Ovary (tissue), 10 donors: ENCODE measurements at regions of chr22 and their contacts with region 1.

Region 1: DNA sequence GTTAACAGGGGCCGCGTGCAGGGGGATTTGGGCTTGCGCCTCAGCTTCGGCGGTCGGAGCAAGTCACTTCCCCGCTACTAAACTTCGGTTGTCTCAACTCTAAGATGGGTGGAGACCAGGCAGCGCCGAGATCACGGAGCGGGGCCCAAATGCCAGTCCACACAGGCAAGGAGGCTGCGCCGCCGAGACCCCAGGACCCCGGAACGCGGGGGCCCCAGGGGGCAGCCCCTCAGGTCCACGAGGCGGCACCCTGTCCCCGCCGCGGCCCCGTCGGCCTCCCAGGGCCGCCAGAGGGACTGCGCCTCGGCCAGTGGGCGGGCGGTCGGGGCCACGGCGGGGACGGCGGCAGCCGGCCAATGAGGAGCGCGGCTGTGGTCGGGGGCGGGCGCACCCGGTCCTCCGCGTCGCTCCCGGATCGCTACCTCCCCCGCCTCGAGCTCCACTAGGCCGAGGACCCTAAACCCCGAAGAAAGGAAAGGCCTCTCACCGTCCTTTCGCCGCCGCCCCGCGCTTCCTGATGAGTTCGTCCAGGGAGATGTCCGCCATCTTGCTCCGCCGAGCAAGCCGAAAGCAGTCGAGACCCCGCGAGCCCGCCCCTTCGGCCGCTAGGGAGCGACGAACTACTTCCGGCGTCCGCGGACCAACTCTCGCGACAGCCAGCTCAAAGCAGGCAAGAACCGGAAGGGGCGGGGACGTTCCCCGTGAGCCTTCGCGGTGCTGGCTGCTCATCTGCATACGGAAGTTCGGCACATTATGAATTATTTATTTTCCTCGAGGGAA is at the start of gene POLDIP3:
- DNase-seq: peak; percentile 99 to 100 (median 99)
- H3K4me3 ChIP-seq: peak within 1 kb of the TSS; percentile 89
- H3K27ac ChIP-seq: peak within 1 kb of the TSS; percentile 91 to 92
- H3K4me1 ChIP-seq: peaks cover 16% of the 10 kb centered on the region
- H3K27me3 ChIP-seq: no peaks in the 10 kb centered on the region
- CTCF ChIP-seq: no peak
- EP300 ChIP-seq: no peak
- POLR2A ChIP-seq: peak; percentile 60
- total RNA-seq, gene POLDIP3: 44.0 to 133 (median 103) TPM

Region 2: DNA sequence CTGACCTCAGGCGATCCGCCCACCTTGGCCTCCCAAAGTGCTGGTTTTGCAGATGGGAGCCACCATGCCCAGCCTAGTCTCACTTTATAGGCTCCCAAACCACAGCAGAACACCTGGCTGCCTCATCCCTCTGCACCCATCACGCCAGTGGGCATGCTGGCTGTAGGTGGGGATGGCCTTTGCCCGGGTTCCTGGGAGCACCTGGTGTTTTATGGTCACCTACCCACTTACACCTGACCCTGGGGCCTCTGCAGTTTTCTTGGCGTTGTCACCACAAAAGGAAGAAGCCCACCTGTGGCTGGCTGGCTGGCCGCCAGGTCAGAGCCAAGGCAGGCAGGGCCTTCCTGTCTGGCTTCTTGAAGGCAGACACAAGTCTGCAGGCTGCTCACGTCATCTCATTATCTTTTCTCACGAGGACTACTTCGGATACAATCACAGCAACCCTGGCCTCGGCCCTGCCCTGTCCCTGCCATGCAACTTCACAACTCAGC is 103.1 kb before region 1 on chr22:
- intact Hi-C with region 1: loop called in 1 of 4 experiments (anchors 10 kb)
- DNase-seq: peak in 3 of 5 donors; percentile 52 to 66 (median 56)
- H3K4me3 ChIP-seq: no peak overlapping the region
- H3K27ac ChIP-seq: no peak overlapping the region
- H3K4me1 ChIP-seq: no peaks in the 10 kb centered on the region
- H3K27me3 ChIP-seq: no peaks in the 10 kb centered on the region
- CTCF ChIP-seq: no peak
- EP300 ChIP-seq: no peak
- POLR2A ChIP-seq: no peak

Region 3: DNA sequence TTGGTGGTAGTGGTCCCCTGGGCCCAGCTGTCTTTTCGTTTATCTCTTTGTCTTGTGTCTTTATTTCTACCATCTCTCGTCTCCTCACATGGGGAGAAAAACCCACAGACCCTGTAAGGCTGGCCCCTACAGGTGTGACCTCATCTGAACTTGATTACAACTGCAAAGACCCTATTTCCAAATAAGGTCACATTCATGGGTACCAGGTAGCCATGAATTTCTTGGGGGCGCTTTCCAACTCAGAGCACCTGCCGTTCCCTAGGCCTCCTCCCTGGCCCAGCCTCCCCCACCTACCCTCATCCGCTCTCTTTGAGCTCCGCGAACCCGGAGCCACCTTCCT is 80.9 kb before region 1 on chr22:
- intact Hi-C with region 1: loop called in 1 of 4 experiments (anchors 10 kb)
- DNase-seq: no peak
- H3K4me3 ChIP-seq: no peak overlapping the region
- H3K27ac ChIP-seq: no peak overlapping the region
- H3K4me1 ChIP-seq: no peaks in the 10 kb centered on the region
- H3K27me3 ChIP-seq: no peaks in the 10 kb centered on the region
- CTCF ChIP-seq: no peak
- EP300 ChIP-seq: no peak
- POLR2A ChIP-seq: no peak